ENCODE measurements at regions of chr7 and their contacts with region 1.

Region 1: DNA sequence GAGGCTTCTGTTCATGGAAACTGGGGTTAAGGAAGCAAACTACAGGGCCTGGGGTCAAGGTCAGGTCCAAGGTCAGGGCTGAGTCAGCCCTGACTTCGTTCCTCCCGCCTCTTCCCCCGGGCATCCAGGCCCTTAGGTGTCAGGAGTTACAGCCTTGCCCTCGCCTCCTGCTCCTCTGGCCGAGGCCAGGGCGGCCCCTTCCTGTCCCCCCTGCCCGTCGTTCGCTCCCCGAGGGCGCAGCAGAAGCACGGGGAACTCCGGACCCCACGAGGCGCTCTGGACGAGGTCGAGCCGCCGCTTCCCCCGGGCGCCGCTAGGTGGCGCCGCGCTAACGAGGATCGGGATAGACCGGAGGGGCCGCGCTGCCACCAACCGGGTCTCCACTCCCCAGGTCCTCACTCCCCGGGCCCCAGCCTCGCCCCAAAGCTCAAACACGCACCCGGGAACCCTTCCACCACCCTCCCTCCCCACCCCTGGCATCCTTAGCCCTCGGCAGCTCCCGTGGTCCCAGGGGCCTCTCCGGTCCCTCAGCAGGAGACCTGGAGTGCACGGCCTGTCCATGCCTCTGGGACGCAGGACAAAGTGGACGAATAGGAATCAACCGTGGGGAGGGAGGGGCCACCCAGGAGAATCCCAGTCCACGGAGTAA is 59.2 kb upstream of the MYL10 start:
- DNase-seq: peak; percentile 92
- ATAC-seq: peak; percentile 93

Region 2: DNA sequence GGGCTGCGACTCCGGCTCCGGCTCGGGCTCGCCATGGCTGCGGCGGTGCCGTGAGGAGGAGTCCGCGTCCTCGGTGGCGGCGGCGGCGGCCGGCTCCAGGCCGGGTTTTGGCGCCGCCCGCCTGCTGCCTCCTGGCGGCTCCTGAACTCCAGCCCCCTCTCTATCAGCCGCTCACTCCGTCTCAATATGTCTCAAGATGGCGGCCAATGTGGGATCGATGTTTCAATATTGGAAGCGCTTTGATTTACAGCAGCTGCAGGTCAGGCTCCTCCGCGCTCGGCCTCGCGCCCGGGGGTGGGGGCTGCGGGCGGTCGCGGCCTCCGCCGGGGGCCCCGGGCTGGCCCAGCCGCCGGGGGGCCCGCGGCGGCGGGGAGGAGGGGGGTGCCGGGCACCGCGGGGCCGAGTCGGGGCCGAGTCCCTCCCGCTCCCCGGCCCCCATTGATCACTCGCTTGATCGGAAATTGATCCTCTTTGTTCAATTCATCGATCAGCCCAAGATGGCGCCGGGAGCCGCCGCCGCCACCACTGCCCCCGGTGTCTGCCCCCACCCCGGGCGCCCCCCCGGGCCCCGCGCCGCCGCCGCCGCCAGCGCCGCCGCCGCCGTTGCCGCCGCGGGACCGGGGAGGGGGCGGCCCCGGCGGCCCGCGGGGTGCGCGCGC is 127.7 kb after region 1 on chr7:
- intact Hi-C with region 1: loop called (anchors 10 kb)
- DNase-seq: peak; percentile 78
- ATAC-seq: peak; percentile 80

Region 3: GRCh38 chr7:102236592-102237287 is 548.4 kb after region 1 on chr7:
- intact Hi-C with region 1: loop called (anchors 10 kb)
- DNase-seq: peak; percentile 79
- ATAC-seq: peak; percentile 90

Region 4: DNA sequence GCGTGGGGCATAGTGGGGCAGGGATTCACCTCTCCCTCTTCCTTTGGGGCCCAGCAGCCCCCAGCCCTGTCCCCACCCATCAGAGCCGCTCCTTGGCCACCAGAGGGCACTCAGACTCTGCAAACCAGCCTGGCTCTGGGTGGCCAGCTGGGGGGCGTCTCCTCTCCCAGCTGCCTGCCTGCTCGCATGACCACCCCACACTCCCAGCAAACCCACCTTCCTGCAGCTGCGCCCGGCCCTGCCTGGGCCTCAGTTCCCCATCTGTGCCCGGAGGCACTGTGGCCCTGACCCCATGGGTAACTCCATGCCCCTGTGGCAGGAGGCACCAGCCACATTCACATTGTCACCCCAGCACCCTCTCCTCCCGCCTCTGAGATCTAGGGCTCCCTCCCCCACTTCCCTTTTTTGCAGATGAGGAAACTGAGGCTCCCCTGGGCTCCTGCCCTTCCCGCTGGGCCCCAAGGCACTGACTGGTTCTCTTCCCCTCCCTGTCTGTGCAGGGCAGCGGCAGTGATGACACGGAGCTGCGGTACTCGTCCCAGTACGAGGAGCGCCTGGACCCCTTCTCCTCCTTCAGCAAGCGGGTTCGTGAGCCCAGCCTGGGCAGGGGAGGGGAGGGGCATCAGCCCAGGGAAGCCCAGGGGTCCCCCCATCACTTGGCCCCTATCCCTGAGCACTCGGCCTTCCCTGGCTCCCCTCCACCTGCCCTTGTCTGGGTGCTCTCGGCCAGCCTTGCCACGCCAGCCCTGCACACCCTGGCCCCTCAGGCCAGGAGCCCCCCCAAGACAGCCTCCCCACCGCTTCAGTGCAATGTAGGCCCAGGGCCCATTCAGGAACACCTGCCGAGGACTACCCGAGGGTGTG is 591.5 kb after region 1 on chr7:
- intact Hi-C with region 1: loop called (anchors 10 kb)
- DNase-seq: no peak
- ATAC-seq: peak; percentile 84

Measured in sciatic nerve (tissue), 2 donors.